Left ventricle myocardium inferior (tissue), 1 donor: ENCODE measurements at regions of chr12 and their contacts with region 1.

Region 1: GRCh38 chr12:76348079-76348901 is at the start of gene BBS10:
- DNase-seq: peak; percentile 92
- H3K4me3 ChIP-seq: peak within 1 kb of the TSS; percentile 86
- H3K27ac ChIP-seq: peak within 1 kb of the TSS; percentile 92
- H3K4me1 ChIP-seq: peaks cover 47% of the 10 kb centered on the region
- H3K27me3 ChIP-seq: no peaks in the 10 kb centered on the region
- CTCF ChIP-seq: peak; percentile 58
- total RNA-seq, gene BBS10: 8.8 TPM

Region 2: GRCh38 chr12:75672200-75672599 is 676.1 kb before region 1 on chr12:
- intact Hi-C with region 1: no loop called
- DNase-seq: no peak
- H3K4me3 ChIP-seq: no peak overlapping the region
- H3K27ac ChIP-seq: no peak overlapping the region
- H3K4me1 ChIP-seq: no peaks in the 10 kb centered on the region
- H3K27me3 ChIP-seq: no peaks in the 10 kb centered on the region
- CTCF ChIP-seq: no peak

Region 3: GRCh38 chr12:76083904-76084862 is 264.1 kb before region 1 on chr12 and contains the start of gene NAP1L1:
- intact Hi-C with region 1: loop called (anchors 10 kb)
- DNase-seq: peak; percentile 99
- H3K4me3 ChIP-seq: peak within 1 kb of the TSS; percentile 97
- H3K27ac ChIP-seq: peak within 1 kb of the TSS; percentile 99
- H3K4me1 ChIP-seq: peaks cover 61% of the 10 kb centered on the region
- H3K27me3 ChIP-seq: no peaks in the 10 kb centered on the region
- CTCF ChIP-seq: no peak
- total RNA-seq, gene NAP1L1: 256 TPM